ENCODE measurements at regions of chr3 and their contacts with region 1.

Region 1: DNA sequence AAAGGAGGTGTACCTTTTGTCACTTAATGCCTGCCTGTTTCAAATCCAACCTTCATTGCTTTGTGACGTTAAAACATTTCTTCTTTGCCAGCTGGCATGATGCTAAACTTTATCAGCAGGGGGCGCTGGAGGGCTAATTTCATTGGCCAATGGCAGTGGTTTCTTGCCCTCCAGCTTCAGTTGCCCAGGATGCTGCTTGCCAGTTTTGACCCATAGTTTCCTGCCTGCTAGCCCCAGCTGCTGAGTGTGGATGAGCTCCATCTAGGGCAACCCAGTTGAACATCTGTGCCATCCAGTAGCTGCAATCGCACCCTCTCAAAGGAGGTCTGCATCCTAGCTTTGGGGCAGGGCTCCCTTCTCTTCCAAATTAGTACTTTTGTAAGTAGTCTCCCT is 22.1 kb downstream of the ACKR2 start:
- DNase-seq: peak; percentile 73
- ATAC-seq: 0 out of 3 replicates have a peak, but pooled peaks have one; percentile 5
- H3K4me3 ChIP-seq: no peak overlapping the region
- H3K27ac ChIP-seq: no peak overlapping the region
- H3K4me1 ChIP-seq: peaks cover 50% of the 10 kb centered on the region
- H3K27me3 ChIP-seq: no peaks in the 10 kb centered on the region
- CTCF ChIP-seq: peak; percentile 91
- EP300 ChIP-seq: no peak
- POLR2A ChIP-seq: no peak
- RAD21 ChIP-seq: peak; percentile 87

Region 2: GRCh38 chr3:42652611-42653302 is 178.6 kb before region 1 on chr3:
- CTCF ChIA-PET with region 1: no interaction called
- POLR2A ChIA-PET with region 1: no interaction called
- in situ Hi-C with region 1: no loop called
- intact Hi-C with region 1: loop called (anchors 5 kb)
- DNase-seq: peak; percentile 29
- ATAC-seq: peak; percentile 32
- H3K4me3 ChIP-seq: peak overlapping the region; percentile 71 to 89 (median 83); a peak in 5 of 6 replicates
- H3K27ac ChIP-seq: no peak overlapping the region
- H3K4me1 ChIP-seq: peaks cover 57% of the 10 kb centered on the region
- H3K27me3 ChIP-seq: no peaks in the 10 kb centered on the region
- CTCF ChIP-seq: no peak
- EP300 ChIP-seq: no peak
- POLR2A ChIP-seq: no peak
- RAD21 ChIP-seq: no peak

Region 3: GRCh38 chr3:42780892-42781700 is 50.2 kb before region 1 on chr3:
- CTCF ChIA-PET with region 1: interaction called, 76 read pairs
- POLR2A ChIA-PET with region 1: interaction called, 8 read pairs
- in situ Hi-C with region 1: loop called (anchors 5 kb)
- intact Hi-C with region 1: loop called (anchors 1 kb)
- DNase-seq: peak; percentile 68
- ATAC-seq: peak; percentile 84
- H3K4me3 ChIP-seq: no peak overlapping the region
- H3K27ac ChIP-seq: no peak overlapping the region
- H3K4me1 ChIP-seq: peaks cover 16% of the 10 kb centered on the region
- H3K27me3 ChIP-seq: no peaks in the 10 kb centered on the region
- CTCF ChIP-seq: peak; percentile 78
- EP300 ChIP-seq: no peak
- POLR2A ChIP-seq: no peak
- RAD21 ChIP-seq: peak; percentile 78

Region 4: DNA sequence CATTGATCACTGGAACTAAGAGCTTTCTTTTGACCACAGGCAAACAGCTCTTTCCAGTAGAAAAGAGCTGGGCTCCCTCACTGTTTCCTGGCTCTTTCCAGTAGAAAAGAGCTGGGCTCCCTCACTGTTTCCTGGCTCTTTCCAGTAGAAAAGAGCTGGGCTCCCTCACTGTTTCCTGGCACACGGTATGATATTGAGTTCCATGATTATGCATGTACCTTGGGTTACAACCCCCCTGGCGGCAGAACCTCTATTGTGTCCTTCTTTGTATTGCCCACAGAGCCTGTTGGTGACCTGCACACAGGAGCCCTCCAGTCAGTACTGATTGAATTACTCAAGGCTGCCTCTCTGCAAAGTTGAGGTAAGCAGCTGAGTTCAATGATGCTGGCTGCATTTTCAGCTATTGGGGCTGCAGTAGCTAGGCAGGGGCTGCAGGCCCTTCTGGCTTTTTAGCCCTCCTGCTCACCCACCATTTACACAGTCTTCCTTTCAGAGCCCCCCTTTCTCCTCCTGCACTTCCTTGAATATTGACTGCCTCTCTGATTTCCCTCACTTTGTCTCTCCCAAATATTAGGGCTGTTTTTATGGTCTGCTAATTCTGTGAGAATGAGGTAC is 11.9 kb before region 1 on chr3:
- CTCF ChIA-PET with region 1: interaction called, 3 read pairs
- POLR2A ChIA-PET with region 1: interaction called, 18 read pairs
- in situ Hi-C with region 1: no loop called
- intact Hi-C with region 1: no loop called
- DNase-seq: peak; percentile 78
- ATAC-seq: peak; percentile 92
- H3K4me3 ChIP-seq: no peak overlapping the region
- H3K27ac ChIP-seq: peak overlapping the region; percentile 54
- H3K4me1 ChIP-seq: peaks cover 81% of the 10 kb centered on the region
- H3K27me3 ChIP-seq: no peaks in the 10 kb centered on the region
- CTCF ChIP-seq: peak; percentile 57
- EP300 ChIP-seq: no peak
- POLR2A ChIP-seq: no peak
- RAD21 ChIP-seq: no peak

Region 5: GRCh38 chr3:42880601-42881451 is 49.5 kb after region 1 on chr3:
- CTCF ChIA-PET with region 1: interaction called, 79 read pairs
- POLR2A ChIA-PET with region 1: interaction called, 19 read pairs
- in situ Hi-C with region 1: loop called (anchors 5 kb)
- intact Hi-C with region 1: loop called (anchors 1 kb)
- DNase-seq: peak; percentile 66
- ATAC-seq: peak; percentile 96
- H3K4me3 ChIP-seq: peak overlapping the region in 2 of 3 experiments; percentile 34 to 56; a peak in 3 of 6 replicates
- H3K27ac ChIP-seq: no peak overlapping the region
- H3K4me1 ChIP-seq: peaks cover 52% of the 10 kb centered on the region
- H3K27me3 ChIP-seq: no peaks in the 10 kb centered on the region; a peak in 1 of 5 replicates
- CTCF ChIP-seq: peak; percentile 99
- EP300 ChIP-seq: no peak
- POLR2A ChIP-seq: no peak
- RAD21 ChIP-seq: peak; percentile 99

Measured in HepG2 (cell line).